ENCODE measurements at regions of chr6 and their contacts with region 1.

Region 1: DNA sequence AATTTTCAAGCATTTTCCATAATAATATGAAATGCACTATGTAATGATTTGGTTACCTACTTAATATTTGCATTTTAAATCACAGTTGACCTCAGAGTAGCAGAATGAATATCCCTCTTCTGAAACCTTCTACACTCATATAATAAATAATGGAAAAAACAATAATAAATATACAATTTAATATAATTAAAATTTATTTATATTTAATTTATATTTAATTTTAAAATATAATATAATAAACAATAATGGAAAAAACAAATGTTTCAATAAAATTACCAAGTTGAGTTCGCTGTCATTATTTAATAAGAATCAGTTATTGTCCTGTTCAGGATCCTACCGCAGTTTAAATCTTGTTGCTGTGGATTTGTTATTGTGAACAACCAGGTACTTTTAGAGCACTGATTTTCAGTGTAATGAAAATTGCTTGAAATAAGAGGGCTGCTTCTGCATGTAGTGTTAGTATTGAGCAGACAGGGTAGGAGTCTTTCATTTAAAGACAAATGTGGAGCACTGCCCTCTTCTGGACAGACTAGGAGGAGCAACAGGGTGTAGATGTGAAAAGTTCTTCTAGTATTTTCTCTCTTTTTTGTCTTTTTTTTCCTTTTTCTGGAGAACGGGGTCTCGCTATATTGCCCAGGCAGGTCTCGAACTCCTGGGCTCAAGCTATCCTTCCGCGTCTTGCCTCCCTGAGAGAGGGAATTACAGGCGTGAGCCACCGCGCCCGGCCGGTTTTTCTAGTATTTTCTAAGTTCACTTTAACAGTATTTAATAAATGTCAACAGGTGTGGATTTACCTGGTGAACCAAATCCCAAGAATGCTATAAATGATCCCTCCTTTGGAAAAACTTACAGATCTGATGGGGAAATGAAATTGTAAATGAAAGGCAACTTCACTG is 13.6 kb downstream of the TRAPPC3L start:
- DNase-seq: no peak
- ATAC-seq: peak; percentile 95
- H3K4me3 Mint-ChIP-seq: no peak overlapping the region
- H3K27ac Mint-ChIP-seq: no peak overlapping the region
- H3K4me1 Mint-ChIP-seq: peaks cover 8% of the 10 kb centered on the region
- H3K27me3 Mint-ChIP-seq: peaks cover 4% of the 10 kb centered on the region
- CTCF ChIP-seq: peak; percentile 86

Region 2: DNA sequence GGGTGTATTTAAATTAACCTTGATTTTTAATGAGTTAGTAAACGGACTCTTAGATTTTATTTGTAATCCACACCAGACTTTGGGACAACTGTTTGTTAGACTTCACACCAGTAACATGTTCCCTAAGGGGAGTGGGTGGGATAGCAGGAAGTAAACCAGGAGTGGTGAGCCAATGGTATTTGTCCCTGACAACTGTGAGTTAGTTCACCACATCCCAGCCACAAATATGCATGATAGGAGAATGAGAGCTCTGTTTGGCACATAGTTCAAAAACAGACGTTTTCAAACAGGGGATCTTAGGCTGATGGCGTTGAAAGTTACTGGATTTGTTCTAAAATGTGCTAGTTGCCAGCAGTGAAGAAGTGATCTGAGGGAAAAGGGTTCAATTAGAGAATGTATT is 387.3 kb before region 1 on chr6:
- CTCF ChIA-PET with region 1: no interaction called
- POLR2A ChIA-PET with region 1: no interaction called
- intact Hi-C with region 1: no loop called
- DNase-seq: no peak
- ATAC-seq: no peak
- H3K4me3 Mint-ChIP-seq: no peak overlapping the region
- H3K27ac Mint-ChIP-seq: no peak overlapping the region
- H3K4me1 Mint-ChIP-seq: no peaks in the 10 kb centered on the region
- H3K27me3 Mint-ChIP-seq: no peaks in the 10 kb centered on the region
- CTCF ChIP-seq: no peak

Region 3: DNA sequence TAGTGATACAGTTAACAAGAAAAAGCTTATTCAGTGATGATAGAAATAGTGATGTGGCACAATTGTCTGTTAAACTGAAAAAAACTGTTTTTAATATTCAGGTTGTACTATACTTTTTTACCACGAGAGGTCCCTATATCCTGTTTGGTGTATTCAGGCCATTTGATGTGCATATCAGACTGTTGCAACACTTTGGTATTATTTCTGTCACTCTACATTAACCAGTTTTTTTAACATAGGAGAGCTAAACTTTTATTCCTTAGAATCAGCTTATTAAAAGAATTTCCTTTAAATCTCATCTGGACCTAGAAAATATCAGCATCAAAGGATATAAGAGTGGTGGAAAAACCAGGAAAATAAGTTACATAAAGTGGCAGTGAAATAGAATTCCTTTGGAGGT is 314.9 kb before region 1 on chr6:
- CTCF ChIA-PET with region 1: interaction called, 15 read pairs
- POLR2A ChIA-PET with region 1: no interaction called
- intact Hi-C with region 1: loop called (anchors 1 kb)
- DNase-seq: no peak
- ATAC-seq: peak; percentile 28
- H3K4me3 Mint-ChIP-seq: no peak overlapping the region
- H3K27ac Mint-ChIP-seq: no peak overlapping the region
- H3K4me1 Mint-ChIP-seq: peaks cover 3% of the 10 kb centered on the region
- H3K27me3 Mint-ChIP-seq: no peaks in the 10 kb centered on the region
- CTCF ChIP-seq: no peak

Region 4: DNA sequence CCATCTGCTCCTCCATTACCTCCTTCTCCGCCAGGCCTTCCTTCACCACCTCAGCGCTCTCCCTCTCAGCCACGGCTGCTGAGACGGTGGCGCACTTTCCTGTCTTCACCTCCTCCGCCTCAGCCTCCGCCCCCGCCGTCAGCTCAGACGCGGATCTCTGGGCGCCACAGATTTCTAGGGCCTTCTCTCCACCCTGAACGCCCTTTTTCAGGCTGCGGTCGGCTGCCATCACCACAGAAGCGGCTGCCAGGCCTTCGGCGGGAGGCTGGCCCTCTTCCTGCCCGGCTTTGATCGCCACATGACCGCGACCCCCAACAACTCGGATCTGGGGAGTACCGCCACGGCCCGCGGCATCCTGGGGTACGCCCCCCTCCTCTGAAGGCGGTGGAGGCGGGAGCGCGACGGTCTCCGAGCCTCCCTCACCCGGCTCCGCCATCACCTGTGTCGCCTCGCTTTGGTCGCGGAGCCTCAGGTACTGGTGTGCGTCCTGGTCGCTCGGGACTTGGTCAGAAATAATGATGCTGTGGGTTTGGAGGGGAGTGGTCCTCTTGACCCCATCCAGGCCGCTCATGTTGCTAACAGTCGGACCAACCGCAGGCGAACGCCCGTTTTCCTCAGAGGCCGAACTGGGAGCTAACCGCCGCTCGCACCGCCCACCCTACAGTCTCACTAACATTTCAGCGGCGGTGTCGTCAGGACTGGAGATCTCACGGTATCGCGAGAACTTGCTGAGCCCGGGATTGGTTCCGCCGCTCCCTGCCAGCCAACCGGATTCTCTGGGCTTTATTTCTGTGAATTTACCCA is 252.5 kb before region 1 on chr6 and contains the start of gene TSPYL1:
- CTCF ChIA-PET with region 1: interaction called, 12 read pairs
- POLR2A ChIA-PET with region 1: interaction called, 3 read pairs
- intact Hi-C with region 1: no loop called
- DNase-seq: peak; percentile 85
- ATAC-seq: peak; percentile 91
- H3K4me3 Mint-ChIP-seq: peak within 1 kb of the TSS; percentile 95
- H3K27ac Mint-ChIP-seq: peak within 1 kb of the TSS; percentile 100
- H3K4me1 Mint-ChIP-seq: peaks cover 71% of the 10 kb centered on the region
- H3K27me3 Mint-ChIP-seq: no peaks in the 10 kb centered on the region
- CTCF ChIP-seq: no peak
- total RNA-seq, gene TSPYL1: 67.4 and 68.4 TPM in 2 replicates

Region 5: DNA sequence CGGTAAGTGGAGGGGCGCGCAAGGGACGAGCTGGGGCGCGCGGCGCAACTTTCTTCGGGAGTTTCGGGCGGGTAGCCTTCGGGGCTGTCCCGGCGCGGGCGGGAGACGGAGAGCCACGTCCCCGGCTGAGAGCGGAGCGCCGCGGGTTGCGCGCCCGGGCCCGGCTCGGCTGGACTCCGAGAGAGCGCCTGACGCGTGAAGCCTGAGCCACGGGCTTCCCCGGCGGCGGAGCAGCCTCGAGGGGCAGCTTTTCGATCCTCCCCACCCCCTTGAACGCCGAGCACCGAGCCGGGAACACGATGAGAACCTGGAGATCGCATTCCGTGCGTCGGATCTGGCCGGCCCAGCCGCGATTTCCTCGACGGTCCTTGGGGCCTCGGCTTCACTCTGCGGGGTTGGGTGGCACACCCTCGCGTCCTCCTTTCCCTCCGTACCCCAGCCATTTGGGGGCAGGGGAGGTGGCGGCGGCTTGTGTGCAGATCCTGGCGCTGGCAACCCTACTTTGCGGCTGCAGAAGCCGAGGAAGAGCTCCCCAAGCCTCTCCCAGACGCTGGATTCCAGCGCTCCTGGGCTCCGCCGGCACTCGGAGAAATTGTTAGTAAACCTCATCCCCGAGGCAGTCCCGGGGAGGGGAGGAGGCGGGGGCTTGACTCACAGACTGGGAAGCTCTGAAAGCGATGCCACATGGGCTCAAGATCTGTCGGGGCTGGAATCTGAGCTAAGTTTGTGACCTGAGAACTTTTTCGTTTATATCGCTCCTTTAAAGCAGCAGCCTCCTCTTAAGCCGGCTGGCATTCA is 160.6 kb before region 1 on chr6:
- CTCF ChIA-PET with region 1: interaction called, 4 read pairs
- POLR2A ChIA-PET with region 1: interaction called, 5 read pairs
- intact Hi-C with region 1: loop called (anchors 1 kb)
- DNase-seq: peak; percentile 48
- ATAC-seq: peak; percentile 49
- H3K4me3 Mint-ChIP-seq: peak overlapping the region; percentile 90
- H3K27ac Mint-ChIP-seq: peak overlapping the region; percentile 69
- H3K4me1 Mint-ChIP-seq: peaks cover 26% of the 10 kb centered on the region
- H3K27me3 Mint-ChIP-seq: peaks cover 2% of the 10 kb centered on the region
- CTCF ChIP-seq: no peak

Region 6: GRCh38 chr6:116456927-116457326 is 75.0 kb before region 1 on chr6:
- CTCF ChIA-PET with region 1: no interaction called
- POLR2A ChIA-PET with region 1: no interaction called
- intact Hi-C with region 1: no loop called
- DNase-seq: no peak
- ATAC-seq: no peak
- H3K4me3 Mint-ChIP-seq: no peak overlapping the region
- H3K27ac Mint-ChIP-seq: no peak overlapping the region
- H3K4me1 Mint-ChIP-seq: peaks cover 13% of the 10 kb centered on the region
- H3K27me3 Mint-ChIP-seq: no peaks in the 10 kb centered on the region
- CTCF ChIP-seq: no peak

Region 7: GRCh38 chr6:116561377-116562018 is 29.6 kb after region 1 on chr6:
- CTCF ChIA-PET with region 1: interaction called, 16 read pairs
- POLR2A ChIA-PET with region 1: no interaction called
- intact Hi-C with region 1: loop called (anchors 1 kb)
- DNase-seq: peak; percentile 37
- ATAC-seq: peak; percentile 81
- H3K4me3 Mint-ChIP-seq: no peak overlapping the region
- H3K27ac Mint-ChIP-seq: no peak overlapping the region
- H3K4me1 Mint-ChIP-seq: peaks cover 2% of the 10 kb centered on the region
- H3K27me3 Mint-ChIP-seq: peaks cover 14% of the 10 kb centered on the region
- CTCF ChIP-seq: peak; percentile 50

Region 8: DNA sequence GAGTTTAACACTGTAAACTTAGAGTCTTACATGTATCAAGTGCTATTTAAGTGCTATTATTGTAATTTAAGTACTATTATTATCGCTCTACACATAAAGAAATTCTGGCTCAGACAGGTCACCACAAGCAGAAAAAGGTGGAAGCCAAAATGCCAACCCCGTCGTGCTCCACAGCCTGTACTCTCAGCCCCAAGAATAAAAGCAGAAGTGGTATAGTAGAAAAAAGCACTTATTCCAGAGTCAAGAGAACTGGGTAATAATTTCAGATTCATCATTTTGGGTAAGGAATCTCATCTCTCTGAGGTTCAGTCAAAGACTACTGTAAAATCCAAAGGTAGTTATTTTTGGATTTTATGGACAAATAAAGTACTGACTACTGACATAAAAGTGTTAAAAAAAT is 135.7 kb after region 1 on chr6:
- CTCF ChIA-PET with region 1: no interaction called
- POLR2A ChIA-PET with region 1: no interaction called
- intact Hi-C with region 1: no loop called
- DNase-seq: no peak
- ATAC-seq: peak; percentile 62
- H3K4me3 Mint-ChIP-seq: peak overlapping the region; percentile 100
- H3K27ac Mint-ChIP-seq: peak overlapping the region; percentile 99
- H3K4me1 Mint-ChIP-seq: peaks cover 41% of the 10 kb centered on the region
- H3K27me3 Mint-ChIP-seq: peaks cover 8% of the 10 kb centered on the region
- CTCF ChIP-seq: no peak

Region 9: GRCh38 chr6:116847227-116847626 is 315.3 kb after region 1 on chr6:
- CTCF ChIA-PET with region 1: no interaction called
- POLR2A ChIA-PET with region 1: no interaction called
- intact Hi-C with region 1: loop called (anchors 2 kb)
- DNase-seq: no peak
- ATAC-seq: no peak
- H3K4me3 Mint-ChIP-seq: no peak overlapping the region
- H3K27ac Mint-ChIP-seq: no peak overlapping the region
- H3K4me1 Mint-ChIP-seq: no peaks in the 10 kb centered on the region
- H3K27me3 Mint-ChIP-seq: peaks cover 3% of the 10 kb centered on the region
- CTCF ChIP-seq: no peak

Measured in activated B cell treated with CpG ODN at 0.5 μM for 24 hours (primary cell).